ENCODE measurements at regions of chr10 and their contacts with region 1.

Region 1: GRCh38 chr10:97676770-97677581 is 10.1 kb downstream of the AVPI1 start:
- DNase-seq: peak; percentile 67
- H3K4me3 Mint-ChIP-seq: no peak overlapping the region
- H3K27ac Mint-ChIP-seq: peak overlapping the region; percentile 31
- H3K4me1 Mint-ChIP-seq: peaks cover 18% of the 10 kb centered on the region
- H3K27me3 Mint-ChIP-seq: no peaks in the 10 kb centered on the region
- CTCF ChIP-seq: peak; percentile 82

Region 2: GRCh38 chr10:97640174-97640867 is 36.7 kb before region 1 on chr10 and contains the start of gene PI4K2A:
- CTCF ChIA-PET with region 1: interaction called, 3 read pairs
- POLR2A ChIA-PET with region 1: interaction called, 22 read pairs
- intact Hi-C with region 1: no loop called
- DNase-seq: peak; percentile 99
- H3K4me3 Mint-ChIP-seq: peak within 1 kb of the TSS; percentile 87
- H3K27ac Mint-ChIP-seq: peak within 1 kb of the TSS; percentile 10
- H3K4me1 Mint-ChIP-seq: peaks cover 15% of the 10 kb centered on the region
- H3K27me3 Mint-ChIP-seq: no peaks in the 10 kb centered on the region
- CTCF ChIP-seq: no peak
- total RNA-seq, gene PI4K2A: 23.5 and 26.6 TPM in 2 replicates

Region 3: GRCh38 chr10:97701438-97702069 is 24.6 kb after region 1 on chr10:
- CTCF ChIA-PET with region 1: interaction called, 113 read pairs
- POLR2A ChIA-PET with region 1: interaction called, 915 read pairs
- intact Hi-C with region 1: no loop called
- DNase-seq: peak; percentile 88
- H3K4me3 Mint-ChIP-seq: no peak overlapping the region
- H3K27ac Mint-ChIP-seq: no peak overlapping the region
- H3K4me1 Mint-ChIP-seq: peaks cover 8% of the 10 kb centered on the region
- H3K27me3 Mint-ChIP-seq: no peaks in the 10 kb centered on the region
- CTCF ChIP-seq: peak; percentile 80

Region 4: GRCh38 chr10:97731346-97732051 is 54.5 kb after region 1 on chr10:
- CTCF ChIA-PET with region 1: interaction called, 25 read pairs
- POLR2A ChIA-PET with region 1: interaction called, 270 read pairs
- intact Hi-C with region 1: loop called (anchors 1 kb)
- DNase-seq: peak; percentile 92
- H3K4me3 Mint-ChIP-seq: no peak overlapping the region
- H3K27ac Mint-ChIP-seq: no peak overlapping the region
- H3K4me1 Mint-ChIP-seq: peaks cover 15% of the 10 kb centered on the region
- H3K27me3 Mint-ChIP-seq: no peaks in the 10 kb centered on the region
- CTCF ChIP-seq: peak; percentile 86

Region 5: DNA sequence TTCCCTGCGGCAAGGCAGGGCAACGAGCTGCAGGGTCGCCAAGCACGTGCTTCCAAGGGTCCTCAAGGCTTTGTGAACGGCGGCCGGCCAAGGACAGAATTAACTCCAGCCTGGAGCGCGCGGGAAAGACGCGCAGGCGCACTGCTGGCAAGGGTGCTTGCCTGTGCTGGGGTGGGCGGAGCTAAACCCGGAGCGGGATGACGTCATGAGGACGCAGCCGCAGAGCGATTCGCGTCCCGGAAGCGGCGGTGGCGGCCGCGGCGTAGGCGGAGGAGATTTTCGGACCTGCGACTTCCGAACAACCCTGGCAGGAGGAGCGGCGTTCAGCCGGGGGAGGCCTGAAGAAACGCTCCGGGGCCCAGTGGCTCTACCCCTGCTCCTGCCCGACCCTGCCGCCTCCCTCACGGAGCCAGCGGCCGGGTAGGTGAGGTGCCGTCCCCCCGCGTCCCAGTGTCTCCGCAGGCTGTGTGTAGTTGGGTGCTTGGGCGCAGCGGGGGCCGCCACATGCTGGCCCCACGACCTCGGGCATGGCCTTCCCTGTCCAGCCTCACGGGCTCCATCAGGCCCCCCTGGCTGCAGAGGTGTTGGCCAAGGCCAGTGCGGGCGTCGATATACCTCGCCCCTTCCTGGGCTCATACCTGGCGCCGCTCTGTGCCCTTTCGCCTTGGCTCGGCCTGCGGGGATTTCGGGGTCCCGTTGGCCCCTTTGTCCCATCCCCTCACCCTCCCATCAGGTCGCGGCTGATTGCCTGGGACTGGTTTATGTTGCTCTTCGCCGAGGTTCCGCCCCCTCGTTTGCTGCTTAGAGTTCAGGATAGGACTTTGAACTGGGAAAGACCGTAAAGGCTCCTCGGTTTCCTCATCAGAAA is 60.2 kb after region 1 on chr10 and contains the start of gene ZFYVE27:
- CTCF ChIA-PET with region 1: interaction called, 25 read pairs
- POLR2A ChIA-PET with region 1: interaction called, 184 read pairs
- intact Hi-C with region 1: no loop called
- DNase-seq: peak; percentile 93
- H3K4me3 Mint-ChIP-seq: peak within 1 kb of the TSS; percentile 82
- H3K27ac Mint-ChIP-seq: peak within 1 kb of the TSS; percentile 89
- H3K4me1 Mint-ChIP-seq: peaks cover 27% of the 10 kb centered on the region
- H3K27me3 Mint-ChIP-seq: no peaks in the 10 kb centered on the region
- CTCF ChIP-seq: no peak
- total RNA-seq, gene ZFYVE27: 25.7 and 28.7 TPM in 2 replicates